ENCODE measurements at regions of chr1 and their contacts with region 1.

Region 1: GRCh38 chr1:157490467-157491165 is 61.7 kb downstream of the FCRL5 start:
- DNase-seq: peak; percentile 40
- H3K4me3 ChIP-seq: no peak overlapping the region
- H3K27ac ChIP-seq: no peak overlapping the region
- H3K4me1 ChIP-seq: no peaks in the 10 kb centered on the region
- H3K27me3 ChIP-seq: no peaks in the 10 kb centered on the region
- CTCF ChIP-seq: peak; percentile 49 to 71

Region 2: DNA sequence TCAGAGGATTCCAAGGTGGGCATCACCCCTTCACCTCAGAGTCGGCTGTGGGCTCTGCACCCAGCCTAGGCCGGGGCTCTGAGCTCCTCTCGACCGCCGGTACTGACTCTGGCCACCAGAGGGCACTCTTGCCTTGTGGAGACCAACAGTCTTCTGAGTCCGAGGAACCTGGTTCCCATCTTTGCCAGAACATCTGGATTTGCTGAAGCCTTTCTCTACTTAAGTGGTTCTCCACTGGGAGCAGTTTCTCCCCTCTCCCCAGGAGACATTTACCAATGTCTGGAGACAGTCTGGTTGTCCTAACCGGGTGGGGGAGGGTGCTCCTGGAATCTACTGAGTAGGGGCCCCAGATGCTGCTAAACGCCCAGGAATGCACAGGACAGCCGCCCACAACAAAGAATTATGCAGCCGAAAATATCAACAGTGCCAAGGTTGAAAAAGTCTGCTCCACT is 400.4 kb before region 1 on chr1:
- CTCF ChIA-PET with region 1: no interaction called
- dilution Hi-C with region 1: no loop called
- in situ Hi-C with region 1: no loop called
- intact Hi-C with region 1: loop called (anchors 5 kb)
- DNase-seq: peak; percentile 60
- H3K4me3 ChIP-seq: no peak overlapping the region
- H3K27ac ChIP-seq: no peak overlapping the region
- H3K4me1 ChIP-seq: peaks cover 10% of the 10 kb centered on the region
- H3K27me3 ChIP-seq: no peaks in the 10 kb centered on the region
- CTCF ChIP-seq: peak; percentile 88 to 94

Region 3: DNA sequence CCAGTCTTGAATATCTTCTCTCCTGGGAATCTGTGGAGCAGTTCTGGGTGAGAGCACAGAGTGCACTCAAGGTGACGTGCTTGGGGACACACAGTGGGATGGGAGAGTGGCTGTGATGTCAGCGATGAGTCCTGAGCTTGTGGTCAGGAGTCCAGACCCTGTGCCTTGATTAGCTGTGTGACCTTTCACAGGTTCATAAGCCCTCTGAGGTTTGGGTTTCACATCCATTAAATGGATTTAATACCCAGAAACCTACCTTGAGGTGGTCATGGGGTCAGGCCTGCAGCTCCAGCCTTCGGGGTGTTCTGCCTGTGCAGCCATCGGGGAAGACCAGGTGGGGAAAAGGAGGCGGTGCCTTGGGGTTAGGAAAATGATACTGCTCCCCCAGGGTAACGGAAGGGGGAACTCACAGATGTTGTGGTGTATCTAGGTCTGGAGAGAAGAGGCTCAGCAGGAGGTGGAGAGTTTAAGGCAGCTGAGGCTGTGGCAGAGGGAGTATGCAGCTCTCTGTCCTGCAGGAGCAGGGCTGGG is 314.0 kb before region 1 on chr1:
- CTCF ChIA-PET with region 1: no interaction called
- dilution Hi-C with region 1: loop called (anchors 25 kb)
- in situ Hi-C with region 1: no loop called
- intact Hi-C with region 1: loop called (anchors 2 kb)
- DNase-seq: no peak
- H3K4me3 ChIP-seq: no peak overlapping the region
- H3K27ac ChIP-seq: no peak overlapping the region
- H3K4me1 ChIP-seq: no peaks in the 10 kb centered on the region
- H3K27me3 ChIP-seq: peaks cover 2% of the 10 kb centered on the region
- CTCF ChIP-seq: no peak

Region 4: GRCh38 chr1:157193702-157194391 is 296.8 kb before region 1 on chr1:
- CTCF ChIA-PET with region 1: interaction called, 3 read pairs
- dilution Hi-C with region 1: loop called (anchors 25 kb)
- in situ Hi-C with region 1: loop called (anchors 10 kb)
- intact Hi-C with region 1: loop called (anchors 2 kb)
- DNase-seq: peak; percentile 63
- H3K4me3 ChIP-seq: no peak overlapping the region
- H3K27ac ChIP-seq: no peak overlapping the region
- H3K4me1 ChIP-seq: peaks cover 15% of the 10 kb centered on the region
- H3K27me3 ChIP-seq: no peaks in the 10 kb centered on the region
- CTCF ChIP-seq: peak; percentile 70 to 72

Region 5: GRCh38 chr1:157199421-157199755 is 291.2 kb before region 1 on chr1:
- CTCF ChIA-PET with region 1: no interaction called
- dilution Hi-C with region 1: loop called (anchors 25 kb)
- in situ Hi-C with region 1: loop called (anchors 10 kb)
- intact Hi-C with region 1: loop called (anchors 2 kb)
- DNase-seq: peak; percentile 24
- H3K4me3 ChIP-seq: no peak overlapping the region
- H3K27ac ChIP-seq: no peak overlapping the region
- H3K4me1 ChIP-seq: no peaks in the 10 kb centered on the region
- H3K27me3 ChIP-seq: no peaks in the 10 kb centered on the region
- CTCF ChIP-seq: no peak

Region 6: GRCh38 chr1:157369808-157370521 is 120.7 kb before region 1 on chr1:
- CTCF ChIA-PET with region 1: no interaction called
- dilution Hi-C with region 1: no loop called
- in situ Hi-C with region 1: loop called (anchors 5 to 10 kb)
- intact Hi-C with region 1: loop called (anchors 1 kb)
- DNase-seq: peak; percentile 50
- H3K4me3 ChIP-seq: no peak overlapping the region
- H3K27ac ChIP-seq: no peak overlapping the region
- H3K4me1 ChIP-seq: no peaks in the 10 kb centered on the region
- H3K27me3 ChIP-seq: no peaks in the 10 kb centered on the region
- CTCF ChIP-seq: peak; percentile 83 to 91

Region 7: GRCh38 chr1:157380523-157380922 is 110.1 kb before region 1 on chr1:
- CTCF ChIA-PET with region 1: interaction called, 4 read pairs
- dilution Hi-C with region 1: no loop called
- in situ Hi-C with region 1: loop called (anchors 5 to 10 kb)
- intact Hi-C with region 1: loop called (anchors 1 kb)
- DNase-seq: no peak
- H3K4me3 ChIP-seq: no peak overlapping the region
- H3K27ac ChIP-seq: no peak overlapping the region
- H3K4me1 ChIP-seq: no peaks in the 10 kb centered on the region
- H3K27me3 ChIP-seq: no peaks in the 10 kb centered on the region
- CTCF ChIP-seq: no peak

Region 8: DNA sequence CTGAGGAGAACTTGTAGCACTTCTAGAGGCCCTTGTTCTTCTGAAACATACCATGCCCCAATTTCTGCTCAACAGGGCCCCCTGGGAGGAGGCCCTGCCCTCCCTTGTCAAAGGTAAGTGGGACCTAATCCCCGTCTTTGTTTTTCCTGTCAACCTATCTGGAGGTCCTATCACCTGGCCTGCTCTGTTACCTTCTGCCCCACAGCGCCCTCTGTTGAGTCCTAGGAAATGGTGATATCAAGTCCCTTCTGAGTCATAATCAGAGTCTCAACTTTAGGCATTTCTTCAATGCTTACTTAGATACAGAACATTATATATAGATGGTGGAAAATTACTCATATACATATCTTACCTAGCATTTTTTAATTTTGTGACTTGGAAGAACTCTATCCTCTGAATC is 135.5 kb after region 1 on chr1:
- CTCF ChIA-PET with region 1: no interaction called
- dilution Hi-C with region 1: no loop called
- in situ Hi-C with region 1: no loop called
- intact Hi-C with region 1: no loop called
- DNase-seq: no peak
- H3K4me3 ChIP-seq: no peak overlapping the region
- H3K27ac ChIP-seq: no peak overlapping the region
- H3K4me1 ChIP-seq: no peaks in the 10 kb centered on the region
- H3K27me3 ChIP-seq: no peaks in the 10 kb centered on the region
- CTCF ChIP-seq: peak; percentile 31 to 37

Measured in mammary epithelial cell (primary cell).